ENCODE measurements at regions of chr16 and their contacts with region 1.

Region 1: GRCh38 chr16:24102209-24102660 is 153.9 kb upstream of the CACNG3 start:
- DNase-seq: no peak
- ATAC-seq: no peak
- H3K4me3 ChIP-seq: no peak overlapping the region
- H3K27ac ChIP-seq: no peak overlapping the region
- H3K4me1 ChIP-seq: no peaks in the 10 kb centered on the region
- H3K27me3 ChIP-seq: peaks cover 24% of the 10 kb centered on the region; the same call in 1 of the 2 replicates
- CTCF ChIP-seq: no peak
- POLR2A ChIP-seq: no peak
- RAD21 ChIP-seq: no peak

Region 2: DNA sequence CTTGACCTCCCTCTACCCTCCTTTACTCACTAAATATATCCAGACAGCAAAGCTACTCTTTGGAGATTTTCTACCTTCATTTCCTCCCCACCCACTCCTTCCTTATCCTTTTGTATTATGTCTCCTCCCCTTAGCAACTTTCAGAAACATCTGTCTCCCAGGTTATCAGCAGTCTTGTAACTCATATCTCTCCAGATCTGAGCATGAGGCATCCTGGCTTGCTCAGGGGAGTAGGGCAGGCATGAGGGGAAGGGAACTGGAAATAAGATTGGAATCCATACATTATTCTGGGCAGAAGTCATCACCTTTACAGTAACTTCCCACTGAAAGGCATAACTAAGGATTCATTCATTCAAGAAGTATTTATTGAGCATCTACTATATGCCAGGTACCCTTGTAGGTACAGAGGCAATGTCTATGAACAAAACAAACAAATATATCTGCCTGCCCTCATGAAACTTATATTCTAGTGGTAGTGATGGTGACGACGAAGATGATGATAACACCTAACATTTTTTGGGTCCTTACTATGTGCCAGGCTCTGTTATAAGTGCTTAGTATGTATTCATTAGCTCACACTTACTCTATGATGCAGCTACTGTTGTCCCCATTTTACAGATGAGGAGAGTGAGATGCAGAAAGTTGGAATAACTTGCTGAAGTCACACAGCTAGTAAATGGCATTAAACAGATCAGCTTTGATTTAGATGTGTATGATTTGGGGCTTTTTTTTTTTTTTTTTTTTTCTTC is 30.0 kb after region 1 on chr16:
- CTCF ChIA-PET with region 1: no interaction called
- POLR2A ChIA-PET with region 1: no interaction called
- RAD21 ChIA-PET with region 1: no interaction called
- intact Hi-C with region 1: loop called (anchors 2 kb)
- DNase-seq: no peak
- ATAC-seq: no peak
- H3K4me3 ChIP-seq: no peak overlapping the region
- H3K27ac ChIP-seq: no peak overlapping the region
- H3K4me1 ChIP-seq: no peaks in the 10 kb centered on the region
- H3K27me3 ChIP-seq: peaks cover 25% of the 10 kb centered on the region
- CTCF ChIP-seq: no peak
- POLR2A ChIP-seq: no peak
- RAD21 ChIP-seq: no peak